Dorsolateral prefrontal cortex (tissue), 120 donors: ENCODE measurements at regions of chr12 and their contacts with region 1.

Region 1: DNA sequence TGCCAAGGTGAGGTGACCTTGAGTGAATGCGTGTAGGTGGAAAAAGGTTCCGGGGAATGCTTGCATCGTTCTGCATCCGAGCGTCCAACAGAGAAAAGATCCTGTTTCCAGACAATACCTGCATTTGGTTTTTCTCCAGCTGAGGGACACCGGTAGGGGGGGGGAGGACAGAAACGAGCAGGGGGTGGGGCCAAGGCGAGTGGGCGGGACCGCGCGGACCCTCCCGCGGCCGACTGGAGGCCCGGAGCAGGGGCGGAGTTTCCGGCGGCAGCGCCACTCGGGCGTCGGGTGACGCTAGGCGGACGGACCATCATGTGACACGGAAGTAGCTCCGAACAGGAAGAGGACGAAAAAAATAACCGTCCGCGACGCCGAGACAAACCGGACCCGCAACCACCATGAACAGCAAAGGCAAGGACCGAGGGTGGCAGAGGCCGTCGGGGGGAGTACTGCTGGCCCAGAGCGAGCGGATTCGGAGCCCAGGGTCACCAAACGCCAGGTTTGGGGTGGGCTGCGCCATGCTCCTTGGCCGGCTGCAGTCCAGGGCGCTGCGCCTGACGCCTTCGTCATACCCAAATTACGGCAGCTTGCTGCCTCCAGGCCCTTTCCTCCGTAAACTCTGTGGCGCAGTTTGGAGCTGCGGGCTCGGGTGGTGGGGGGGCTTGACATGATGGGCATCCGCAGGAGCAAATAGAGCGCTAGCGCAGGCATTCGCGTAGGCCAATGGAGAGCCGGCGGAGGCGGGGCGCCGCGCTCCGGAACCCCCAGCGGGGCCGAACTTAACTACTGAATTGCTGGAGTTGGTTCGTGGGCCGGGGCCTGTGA is at the start of gene DAZAP2:
- DNase-seq: peak; percentile 89 to 98 (median 96)
- H3K4me3 ChIP-seq: peak within 1 kb of the TSS; percentile 75 to 100 (median 100)
- H3K27ac ChIP-seq: peak within 1 kb of the TSS; percentile 97 to 100 (median 100)
- H3K27me3 ChIP-seq: no peaks in the 10 kb centered on the region
- CTCF ChIP-seq: peak in 41 of 56 donors; percentile 9 to 62 (median 38)
- total RNA-seq, gene DAZAP2: 91.8 to 231 (median 151) TPM

Region 2: GRCh38 chr12:51047655-51048540 is 190.8 kb before region 1 on chr12 and contains the start of gene LETMD1:
- intact Hi-C with region 1: loop called in 1 of 2 experiments (anchors 10 kb)
- DNase-seq: peak; percentile 85 to 98 (median 96)
- H3K4me3 ChIP-seq: peak within 1 kb of the TSS; percentile 55 to 100 (median 83)
- H3K27ac ChIP-seq: peak within 1 kb of the TSS; percentile 57 to 100 (median 96)
- H3K27me3 ChIP-seq: no peaks in the 10 kb centered on the region
- CTCF ChIP-seq: peak; percentile 49 to 97 (median 90)
- total RNA-seq, gene LETMD1: 43.1 to 97.4 (median 70.1) TPM

Region 3: DNA sequence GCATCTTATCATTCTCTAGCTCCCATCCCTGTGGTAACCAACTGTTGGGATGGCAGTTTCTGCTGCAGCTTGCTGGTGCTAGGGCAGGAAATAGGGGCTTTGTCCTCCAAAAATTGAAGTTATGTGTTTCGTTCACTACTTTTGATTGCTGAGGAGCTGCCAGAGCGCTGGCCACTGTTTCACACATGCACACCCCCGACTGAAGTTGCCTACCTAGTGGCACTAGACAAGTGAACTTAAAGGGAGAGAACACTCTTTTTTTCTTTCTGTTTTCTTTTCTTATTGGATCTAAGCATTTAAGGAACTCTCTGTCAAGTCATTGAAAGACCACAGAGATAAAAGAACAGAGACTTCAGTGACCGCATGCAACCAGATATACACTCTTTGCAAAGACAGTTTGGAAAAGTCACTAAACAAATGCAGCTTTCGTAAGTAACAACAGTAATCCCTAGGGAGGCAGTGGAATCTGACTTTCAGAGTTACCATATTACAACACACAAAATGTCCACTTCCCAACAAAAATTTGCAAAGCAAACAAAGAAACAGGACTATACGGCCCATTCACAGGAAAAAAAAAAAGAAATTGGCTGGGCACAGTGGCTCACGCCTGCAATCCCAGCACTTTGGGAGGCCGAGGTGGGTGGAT is 77.8 kb before region 1 on chr12:
- intact Hi-C with region 1: no loop called
- DNase-seq: no peak
- H3K4me3 ChIP-seq: no peak overlapping the region
- H3K27ac ChIP-seq: no peak overlapping the region
- H3K27me3 ChIP-seq: no peaks in the 10 kb centered on the region
- CTCF ChIP-seq: no peak

Region 4: DNA sequence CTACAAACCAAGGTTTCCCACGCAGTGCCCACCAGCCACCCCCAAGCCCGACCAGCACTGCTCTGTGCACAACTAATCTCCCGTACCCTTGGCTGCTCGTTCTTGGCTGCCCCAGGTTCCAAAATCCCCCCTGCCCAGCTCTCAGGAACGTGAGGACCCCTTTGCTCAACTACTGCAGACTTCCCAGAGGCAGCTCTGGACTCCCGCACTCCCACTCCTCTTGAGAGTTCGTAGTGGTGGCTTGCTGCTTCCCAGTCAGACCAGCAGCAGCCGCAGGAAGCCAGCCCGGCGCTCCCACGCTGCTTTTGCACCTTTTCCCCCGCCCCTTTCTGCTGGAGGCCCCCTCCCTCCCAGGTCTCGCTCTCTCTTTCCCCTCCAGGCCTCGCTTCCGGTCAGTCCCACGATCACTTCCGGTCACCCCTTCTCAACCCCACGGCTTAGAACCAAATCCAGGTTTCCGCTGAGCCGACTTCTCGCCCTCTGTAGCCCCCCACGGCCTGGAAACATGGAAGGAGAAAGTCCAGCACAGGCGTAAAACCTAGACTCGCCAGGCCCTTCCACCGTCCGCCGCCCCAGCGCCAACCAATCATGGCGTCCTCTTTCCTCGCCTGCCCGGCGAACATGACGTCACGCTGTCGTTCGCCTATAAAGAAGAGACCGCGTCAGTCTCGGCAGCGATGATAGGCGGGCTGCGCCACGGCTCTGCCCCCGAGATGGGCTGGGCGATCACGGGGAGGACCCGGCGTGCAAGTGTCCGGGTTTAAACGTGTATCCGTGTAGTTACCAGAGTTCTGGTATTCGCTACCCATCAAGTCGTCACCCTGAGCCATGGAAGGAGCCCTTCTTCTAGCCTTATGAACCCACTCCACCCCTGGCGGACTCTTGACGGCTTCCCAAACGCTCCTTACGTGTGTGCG is 65.9 kb before region 1 on chr12 and contains the start of gene TFCP2:
- intact Hi-C with region 1: loop called (anchors 2 kb)
- DNase-seq: peak; percentile 93 to 98 (median 97)
- H3K4me3 ChIP-seq: peak within 1 kb of the TSS; percentile 67 to 99 (median 88)
- H3K27ac ChIP-seq: peak within 1 kb of the TSS; percentile 76 to 100 (median 96)
- H3K27me3 ChIP-seq: no peaks in the 10 kb centered on the region
- CTCF ChIP-seq: peak in 14 of 56 donors; percentile 5 to 30 (median 12)
- total RNA-seq, gene TFCP2: 24.3 to 46.0 (median 36.2) TPM

Region 5: GRCh38 chr12:51217968-51218606 is 20.6 kb before region 1 on chr12 and contains the start of gene POU6F1:
- intact Hi-C with region 1: loop called in 1 of 2 experiments (anchors 2 kb)
- DNase-seq: peak in 8 of 10 donors; percentile 35 to 79 (median 60)
- H3K4me3 ChIP-seq: peak within 1 kb of the TSS; percentile 56 to 96 (median 86)
- H3K27ac ChIP-seq: peak within 1 kb of the TSS; percentile 91 to 100 (median 98)
- H3K27me3 ChIP-seq: no peaks in the 10 kb centered on the region
- CTCF ChIP-seq: peak in 50 of 56 donors; percentile 13 to 63 (median 44)
- total RNA-seq, gene POU6F1: 55.9 to 145 (median 76.9) TPM

Region 6: GRCh38 chr12:51579321-51579850 is 340.7 kb after region 1 on chr12:
- intact Hi-C with region 1: no loop called
- DNase-seq: no peak
- H3K4me3 ChIP-seq: no peak overlapping the region
- H3K27ac ChIP-seq: no peak overlapping the region
- H3K27me3 ChIP-seq: peaks cover 0 to 3% (median 0%) of the 10 kb centered on the region in 45 donors
- CTCF ChIP-seq: no peak